Naive thymus-derived CD4-positive, alpha-beta T cell (primary cell): ENCODE measurements at regions of chrX and their contacts with region 1.

Region 1: DNA sequence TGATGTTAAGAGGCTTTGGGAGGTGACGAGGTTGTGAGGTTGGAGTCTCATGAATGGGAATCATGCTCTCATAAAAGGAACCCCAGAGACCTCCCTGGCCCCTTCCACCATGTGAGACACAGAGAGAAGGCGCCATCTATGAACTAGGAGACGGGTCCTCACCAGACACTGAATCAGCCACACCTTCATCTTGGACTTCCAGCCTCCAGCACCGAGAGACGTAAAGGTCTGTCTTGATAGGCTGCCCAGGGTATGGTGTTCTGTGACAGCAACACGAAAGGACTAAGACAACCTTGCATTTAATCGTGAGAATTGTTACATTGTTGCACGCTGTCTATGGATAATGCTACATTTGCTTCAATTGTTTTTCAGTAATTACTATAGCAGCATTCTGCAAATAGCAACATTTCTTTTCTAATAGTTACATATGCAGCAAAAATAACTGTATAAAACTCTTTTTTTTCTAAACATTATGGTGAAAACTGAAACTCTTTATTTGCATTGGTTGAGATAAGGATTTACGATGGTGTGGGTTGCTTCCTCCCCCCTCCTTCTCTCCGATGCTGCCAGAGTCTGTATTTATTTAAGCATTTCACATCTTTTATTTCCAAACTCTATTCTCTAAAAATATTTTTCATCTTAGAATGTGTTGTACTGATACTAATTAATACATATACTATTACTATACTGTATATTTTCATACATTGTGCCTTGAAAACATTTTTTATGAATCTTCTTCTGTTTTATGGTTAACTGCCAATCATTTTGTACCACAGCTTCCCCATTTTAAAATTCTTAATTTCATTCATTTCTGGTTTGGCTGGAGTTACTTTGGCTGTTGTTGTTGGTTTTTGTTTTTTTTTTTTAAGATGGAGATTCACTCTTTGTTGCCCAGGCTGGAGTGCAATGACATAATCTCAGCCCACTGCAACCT is 26.4 kb upstream of the AKAP17A start:
- DNase-seq: no peak
- ATAC-seq: no peak
- H3K4me3 ChIP-seq: no peak overlapping the region
- H3K4me3 Mint-ChIP-seq: peak overlapping the region in 4 of 10 donors; percentile 18 to 51 (median 33)
- H3K27ac ChIP-seq: no peak overlapping the region
- H3K27ac Mint-ChIP-seq: peak overlapping the region in 5 of 9 donors; percentile 24 to 86 (median 52)
- H3K4me1 ChIP-seq: peaks cover 27 to 42% of the 10 kb centered on the region in 2 donors
- H3K4me1 Mint-ChIP-seq: peaks cover 33 to 73% (median 66%) of the 10 kb centered on the region in 7 donors
- H3K27me3 ChIP-seq: no peaks in the 10 kb centered on the region
- H3K27me3 Mint-ChIP-seq: peaks cover 0 to 12% (median 0%) of the 10 kb centered on the region in 5 donors

Region 2: DNA sequence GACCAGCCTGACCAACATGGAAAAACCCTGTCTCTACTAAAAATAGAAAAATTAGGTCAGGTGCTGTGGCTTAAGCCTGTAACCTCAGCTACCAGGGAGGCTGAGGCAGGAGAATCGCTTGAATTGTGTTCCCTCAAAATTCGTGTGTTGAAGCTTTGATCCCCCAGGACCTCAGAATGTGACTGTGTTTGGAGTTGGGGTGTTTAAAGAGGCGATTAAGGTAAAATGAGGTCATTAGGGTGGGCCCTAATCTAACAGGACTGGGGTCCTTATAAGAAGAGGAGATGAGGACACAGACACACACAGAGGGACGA is 196.7 kb before region 1 on chrX:
- CTCF ChIA-PET with region 1: no interaction called
- POLR2A ChIA-PET with region 1: no interaction called
- intact Hi-C with region 1: no loop called
- DNase-seq: no peak
- ATAC-seq: no peak
- H3K4me3 ChIP-seq: no peak overlapping the region
- H3K4me3 Mint-ChIP-seq: no peak overlapping the region
- H3K27ac ChIP-seq: no peak overlapping the region
- H3K27ac Mint-ChIP-seq: peak overlapping the region in 2 of 9 donors; percentile 38 to 62
- H3K4me1 ChIP-seq: no peaks in the 10 kb centered on the region
- H3K4me1 Mint-ChIP-seq: no peaks in the 10 kb centered on the region
- H3K27me3 ChIP-seq: no peaks in the 10 kb centered on the region
- H3K27me3 Mint-ChIP-seq: no peaks in the 10 kb centered on the region

Region 3: GRCh38 chrX:1580735-1581531 is 15.9 kb after region 1 on chrX:
- CTCF ChIA-PET with region 1: no interaction called
- POLR2A ChIA-PET with region 1: no interaction called
- intact Hi-C with region 1: loop called in 1 of 2 experiments (anchors 2 kb)
- DNase-seq: peak; percentile 42 to 75 (median 67)
- ATAC-seq: peak; percentile 89
- H3K4me3 ChIP-seq: no peak overlapping the region
- H3K4me3 Mint-ChIP-seq: peak overlapping the region in 5 of 10 donors; percentile 16 to 60 (median 50)
- H3K27ac ChIP-seq: no peak overlapping the region
- H3K27ac Mint-ChIP-seq: peak overlapping the region in 7 of 9 donors; percentile 11 to 83 (median 57)
- H3K4me1 ChIP-seq: peaks cover 33 to 36% of the 10 kb centered on the region in 2 donors
- H3K4me1 Mint-ChIP-seq: peaks cover 17 to 36% (median 28%) of the 10 kb centered on the region in 7 donors
- H3K27me3 ChIP-seq: no peaks in the 10 kb centered on the region
- H3K27me3 Mint-ChIP-seq: no peaks in the 10 kb centered on the region

Region 4: GRCh38 chrX:1945879-1946278 is 380.9 kb after region 1 on chrX:
- CTCF ChIA-PET with region 1: no interaction called
- POLR2A ChIA-PET with region 1: no interaction called
- intact Hi-C with region 1: no loop called
- DNase-seq: no peak
- ATAC-seq: no peak
- H3K4me3 ChIP-seq: no peak overlapping the region
- H3K4me3 Mint-ChIP-seq: no peak overlapping the region
- H3K27ac ChIP-seq: no peak overlapping the region
- H3K27ac Mint-ChIP-seq: no peak overlapping the region
- H3K4me1 ChIP-seq: no peaks in the 10 kb centered on the region
- H3K4me1 Mint-ChIP-seq: no peaks in the 10 kb centered on the region
- H3K27me3 ChIP-seq: no peaks in the 10 kb centered on the region
- H3K27me3 Mint-ChIP-seq: no peaks in the 10 kb centered on the region